B cell (primary cell): ENCODE measurements at regions of chr10 and their contacts with region 1.

Region 1: GRCh38 chr10:25080880-25081581 is 64.6 kb downstream of the THNSL1 start:
- DNase-seq: peak; percentile 59
- ATAC-seq: no peak
- H3K4me3 ChIP-seq: no peak overlapping the region
- H3K4me3 Mint-ChIP-seq: no peak overlapping the region
- H3K27ac ChIP-seq: no peak overlapping the region
- H3K27ac Mint-ChIP-seq: no peak overlapping the region
- H3K4me1 ChIP-seq: peaks cover 0 to 3% of the 10 kb centered on the region in 2 donors
- H3K4me1 Mint-ChIP-seq: no peaks in the 10 kb centered on the region
- H3K27me3 ChIP-seq: no peaks in the 10 kb centered on the region
- H3K27me3 Mint-ChIP-seq: peaks cover 15% of the 10 kb centered on the region
- CTCF ChIP-seq: peak; percentile 79

Region 2: GRCh38 chr10:24617771-24618391 is 463.1 kb before region 1 on chr10:
- CTCF ChIA-PET with region 1: interaction called, 38 read pairs
- POLR2A ChIA-PET with region 1: no interaction called
- intact Hi-C with region 1: loop called (anchors 1 kb)
- DNase-seq: peak; percentile 44
- ATAC-seq: no peak
- H3K4me3 ChIP-seq: no peak overlapping the region
- H3K4me3 Mint-ChIP-seq: no peak overlapping the region
- H3K27ac ChIP-seq: no peak overlapping the region
- H3K27ac Mint-ChIP-seq: no peak overlapping the region
- H3K4me1 ChIP-seq: peaks cover 0 to under 1% of the 10 kb centered on the region in 2 donors
- H3K4me1 Mint-ChIP-seq: peaks cover 6% of the 10 kb centered on the region
- H3K27me3 ChIP-seq: no peaks in the 10 kb centered on the region
- H3K27me3 Mint-ChIP-seq: no peaks in the 10 kb centered on the region
- CTCF ChIP-seq: peak; percentile 70

Region 3: DNA sequence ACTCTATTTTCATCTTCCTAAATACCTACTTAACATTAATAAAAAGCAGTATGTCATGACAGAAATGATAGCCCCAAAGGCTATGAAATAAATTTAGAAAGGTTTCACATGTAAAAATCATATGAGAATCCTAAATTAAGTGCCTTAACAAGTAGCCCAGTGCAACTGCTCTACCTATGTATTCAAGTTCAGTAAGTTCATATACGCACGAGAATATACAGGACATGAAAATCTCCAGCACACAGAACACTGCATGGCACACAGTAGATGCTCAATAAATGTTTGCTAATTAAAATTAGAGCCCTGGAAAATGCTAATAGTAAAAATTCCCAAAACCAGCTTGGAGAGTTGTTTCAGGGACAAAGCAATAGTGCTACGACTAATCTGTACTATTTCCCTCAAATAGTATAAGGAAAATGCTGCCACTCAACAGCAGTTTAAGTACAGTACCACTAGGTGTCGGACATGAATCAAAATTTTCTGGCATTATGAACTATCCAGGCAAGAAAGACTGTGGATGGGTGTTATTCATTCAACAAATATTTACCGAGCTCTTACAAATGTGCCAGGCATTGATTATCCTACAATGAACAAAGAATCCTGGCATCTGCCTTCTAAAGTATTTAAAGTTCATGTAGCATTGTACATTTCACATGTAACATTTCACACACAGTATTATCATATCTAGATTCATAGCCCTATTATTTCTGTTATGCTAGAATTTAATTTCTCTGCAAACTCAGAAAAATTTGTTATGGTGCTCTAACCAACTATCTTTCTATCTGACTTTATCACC is 438.2 kb before region 1 on chr10:
- CTCF ChIA-PET with region 1: interaction called, 85 read pairs
- POLR2A ChIA-PET with region 1: no interaction called
- intact Hi-C with region 1: loop called (anchors 1 kb)
- DNase-seq: peak; percentile 57
- ATAC-seq: peak; percentile 67
- H3K4me3 ChIP-seq: no peak overlapping the region
- H3K4me3 Mint-ChIP-seq: no peak overlapping the region
- H3K27ac ChIP-seq: no peak overlapping the region
- H3K27ac Mint-ChIP-seq: no peak overlapping the region
- H3K4me1 ChIP-seq: no peaks in the 10 kb centered on the region
- H3K4me1 Mint-ChIP-seq: peaks cover 3% of the 10 kb centered on the region
- H3K27me3 ChIP-seq: no peaks in the 10 kb centered on the region
- H3K27me3 Mint-ChIP-seq: no peaks in the 10 kb centered on the region
- CTCF ChIP-seq: peak; percentile 81